ENCODE measurements at regions of chr1 and their contacts with region 1.

Region 1: DNA sequence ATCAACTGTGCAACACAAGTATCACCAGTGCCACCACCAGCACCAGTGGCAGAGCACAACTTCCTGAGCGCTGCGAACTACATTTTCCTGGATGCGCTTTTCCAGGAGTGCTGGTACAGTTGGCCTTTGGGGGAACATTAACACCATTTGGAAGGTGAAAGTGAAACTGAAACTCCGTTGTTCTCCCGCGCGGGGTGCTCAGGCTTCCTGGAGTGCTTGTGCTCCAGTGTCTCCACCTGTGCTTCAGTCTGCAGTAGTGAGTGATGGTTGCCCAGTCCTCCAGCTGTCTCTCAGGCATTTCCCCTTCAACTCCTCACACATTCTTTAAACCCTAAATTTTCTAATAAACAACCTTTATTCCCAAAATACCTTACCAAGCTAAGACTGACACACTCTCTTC is 187.8 kb downstream of the LRRIQ3 start:
- DNase-seq: no peak
- ATAC-seq: peak; percentile 39; the same call in 2 of the 3 replicates
- H3K4me3 ChIP-seq: no peak overlapping the region
- H3K27ac ChIP-seq: no peak overlapping the region
- H3K4me1 ChIP-seq: no peaks in the 10 kb centered on the region
- H3K27me3 ChIP-seq: no peaks in the 10 kb centered on the region
- CTCF ChIP-seq: no peak
- EP300 ChIP-seq: no peak
- POLR2A ChIP-seq: no peak
- RAD21 ChIP-seq: no peak

Region 2: GRCh38 chr1:73998348-73998959 is 11.8 kb before region 1 on chr1:
- CTCF ChIA-PET with region 1: interaction called, 16 read pairs
- POLR2A ChIA-PET with region 1: interaction called, 5 read pairs
- RAD21 ChIA-PET with region 1: interaction called, 6 read pairs
- SMC1A ChIA-PET with region 1: interaction called, 5 read pairs
- in situ Hi-C with region 1: no loop called
- intact Hi-C with region 1: no loop called
- DNase-seq: peak; percentile 1
- ATAC-seq: peak; percentile 63
- H3K4me3 ChIP-seq: no peak overlapping the region
- H3K27ac ChIP-seq: no peak overlapping the region
- H3K4me1 ChIP-seq: no peaks in the 10 kb centered on the region
- H3K27me3 ChIP-seq: no peaks in the 10 kb centered on the region
- CTCF ChIP-seq: peak in 2 of 3 experiments; percentile 31 to 56; a peak in 3 of 6 replicates
- EP300 ChIP-seq: no peak
- POLR2A ChIP-seq: no peak
- RAD21 ChIP-seq: peak; percentile 69

Region 3: GRCh38 chr1:74107394-74107793 is 97.2 kb after region 1 on chr1:
- CTCF ChIA-PET with region 1: no interaction called
- POLR2A ChIA-PET with region 1: no interaction called
- RAD21 ChIA-PET with region 1: no interaction called
- SMC1A ChIA-PET with region 1: no interaction called
- in situ Hi-C with region 1: no loop called
- intact Hi-C with region 1: no loop called
- DNase-seq: no peak
- ATAC-seq: no peak
- H3K4me3 ChIP-seq: no peak overlapping the region
- H3K27ac ChIP-seq: no peak overlapping the region
- H3K4me1 ChIP-seq: no peaks in the 10 kb centered on the region
- H3K27me3 ChIP-seq: no peaks in the 10 kb centered on the region
- CTCF ChIP-seq: no peak
- EP300 ChIP-seq: no peak
- POLR2A ChIP-seq: no peak
- RAD21 ChIP-seq: no peak

Region 4: DNA sequence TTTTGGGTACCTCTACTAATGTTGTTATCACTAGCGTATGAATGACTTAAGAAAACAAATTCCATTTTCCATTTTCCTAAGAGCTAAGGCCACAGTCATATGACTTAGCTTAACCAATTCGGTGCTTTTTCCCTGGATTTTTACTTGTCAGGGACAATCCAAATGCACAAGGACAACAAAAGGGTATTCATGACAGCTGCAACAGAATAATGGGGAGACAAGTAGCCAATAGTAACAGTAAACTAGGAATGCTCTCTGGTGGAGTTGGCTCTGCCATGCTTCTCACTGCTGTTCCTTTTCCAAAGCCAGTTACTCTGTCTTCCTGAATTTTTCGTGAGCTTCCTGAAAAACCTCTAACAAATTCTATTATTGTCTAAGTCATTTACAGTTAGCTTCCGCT is 134.9 kb after region 1 on chr1:
- CTCF ChIA-PET with region 1: no interaction called
- POLR2A ChIA-PET with region 1: no interaction called
- RAD21 ChIA-PET with region 1: no interaction called
- SMC1A ChIA-PET with region 1: no interaction called
- in situ Hi-C with region 1: no loop called
- intact Hi-C with region 1: no loop called
- DNase-seq: no peak
- ATAC-seq: no peak
- H3K4me3 ChIP-seq: no peak overlapping the region
- H3K27ac ChIP-seq: no peak overlapping the region
- H3K4me1 ChIP-seq: no peaks in the 10 kb centered on the region
- H3K27me3 ChIP-seq: no peaks in the 10 kb centered on the region
- CTCF ChIP-seq: no peak
- EP300 ChIP-seq: no peak
- POLR2A ChIP-seq: no peak
- RAD21 ChIP-seq: no peak